Activated T-helper 1 cell treated with anti-CD3 and anti-CD28 coated beads, Interleukin-12 subunit alpha, Interleukin-12 subunit beta, Interleukin-2, Interleukin-4 antibody, amounts not matched to agents 30 ng/mL and 10 ng/mL and 1 ng/mL, durations not matched to agents 14 hours and 24 hours and 36 hours (primary cell): ENCODE measurements at regions of chr19 and their contacts with region 1.

Region 1: DNA sequence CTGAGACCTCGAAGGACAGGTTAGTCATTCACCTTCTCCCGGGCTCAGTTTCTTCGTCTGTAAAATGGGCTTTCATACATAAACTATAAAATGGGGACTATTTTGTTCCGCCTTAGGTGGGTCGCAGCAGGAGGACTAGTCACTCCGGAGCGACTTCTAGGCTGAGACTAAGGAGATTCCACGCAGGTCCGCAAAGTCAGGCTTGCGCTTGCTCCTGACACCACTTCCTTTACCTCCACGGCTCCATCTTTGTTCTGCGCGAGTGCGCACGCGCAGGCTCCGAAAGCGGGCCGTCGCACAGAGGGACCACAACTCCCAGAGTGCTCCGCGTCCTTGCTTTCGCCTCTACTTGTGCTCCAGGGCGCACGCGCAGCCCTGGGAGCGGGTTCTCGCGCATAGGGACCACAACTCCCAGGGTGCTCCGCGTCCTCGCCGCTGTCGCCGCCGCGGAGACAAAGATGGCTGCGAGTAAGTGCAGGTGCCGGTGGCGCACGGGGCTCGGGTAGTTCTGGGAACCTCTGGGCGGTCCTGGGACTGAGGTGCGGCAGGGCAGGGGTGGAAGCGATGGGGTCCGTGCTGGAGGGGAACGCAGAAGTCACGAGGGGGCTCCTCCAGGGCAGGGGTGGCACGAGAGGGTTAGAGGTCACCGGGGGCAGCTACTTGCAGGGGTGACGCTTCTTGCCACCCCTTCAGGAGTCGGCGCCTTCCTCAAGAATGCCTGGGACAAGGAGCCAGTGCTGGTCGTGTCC is at the start of gene NDUFA3:
- DNase-seq: peak; percentile 98
- H3K4me3 Mint-ChIP-seq: peak within 1 kb of the TSS; percentile 99
- H3K27ac Mint-ChIP-seq: peak within 1 kb of the TSS; percentile 87
- H3K4me1 Mint-ChIP-seq: peaks cover 17% of the 10 kb centered on the region
- H3K27me3 Mint-ChIP-seq: no peaks in the 10 kb centered on the region
- total RNA-seq, gene NDUFA3: 110 and 125 TPM in 2 replicates

Region 2: GRCh38 chr19:54115109-54116063 is 12.8 kb after region 1 on chr19 and contains the starts of genes PRPF31 and TFPT:
- intact Hi-C with region 1: loop called (anchors 1 kb)
- DNase-seq: peak; percentile 93
- H3K4me3 Mint-ChIP-seq: peak within 1 kb of the TSS; percentile 94
- H3K27ac Mint-ChIP-seq: peak within 1 kb of the TSS; percentile 91
- H3K4me1 Mint-ChIP-seq: peaks cover 32% of the 10 kb centered on the region
- H3K27me3 Mint-ChIP-seq: no peaks in the 10 kb centered on the region
- total RNA-seq, gene PRPF31: 110 and 118 TPM in 2 replicates
- total RNA-seq, gene TFPT: 31.1 and 33.4 TPM in 2 replicates